Mammary epithelial cell (primary cell): ENCODE measurements at regions of chr12 and their contacts with region 1.

Region 1: DNA sequence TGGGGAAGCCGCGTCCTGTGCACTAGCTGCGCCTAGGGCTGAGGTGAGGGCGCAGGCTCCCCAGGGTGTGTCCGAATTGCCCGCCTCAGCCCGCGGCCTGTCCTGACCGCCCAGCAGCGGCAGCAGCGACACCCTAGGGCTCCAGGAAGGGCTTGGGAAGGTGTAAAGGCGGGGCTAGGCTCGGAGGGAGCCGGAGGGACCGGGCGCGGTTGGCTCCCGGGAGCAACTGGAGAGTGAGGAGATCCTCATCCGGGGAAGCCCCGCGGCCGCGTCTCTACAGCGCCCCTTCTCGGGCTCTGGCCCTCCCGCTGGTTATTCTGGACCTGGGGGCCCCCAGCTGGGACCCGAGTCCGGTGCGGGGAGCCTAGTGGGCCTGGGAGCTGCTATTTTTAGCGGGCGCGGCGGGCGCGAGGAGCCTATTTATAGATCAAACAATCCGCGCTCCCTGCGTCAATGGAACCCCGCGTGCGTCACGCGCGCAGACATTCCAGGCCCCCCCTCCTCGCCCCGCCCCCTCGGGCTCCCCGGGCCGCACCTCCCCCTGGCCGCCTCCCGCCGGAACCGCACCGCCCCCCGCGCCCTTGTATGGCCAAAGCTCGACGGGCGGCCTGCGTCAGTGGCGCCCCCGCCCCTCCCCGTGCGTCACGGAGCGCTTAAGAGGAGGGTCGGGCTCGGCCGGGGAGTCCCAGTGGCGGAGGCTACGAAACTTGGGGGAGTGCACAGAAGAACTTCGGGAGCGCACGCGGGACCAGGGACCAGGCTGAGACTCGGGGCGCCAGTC is at the start of gene NR4A1:
- DNase-seq: peak; percentile 86
- H3K4me3 ChIP-seq: peak within 1 kb of the TSS; percentile 51 to 63 (median 59)
- H3K27ac ChIP-seq: peak within 1 kb of the TSS; percentile 51
- H3K4me1 ChIP-seq: peaks cover 24% of the 10 kb centered on the region
- H3K27me3 ChIP-seq: no peaks in the 10 kb centered on the region
- CTCF ChIP-seq: peak in 1 of 2 donors; percentile 1
- total RNA-seq, gene NR4A1: 0.17 to 2.4 TPM

Region 2: GRCh38 chr12:52069327-52070184 is 18.6 kb after region 1 on chr12 and contains the start of gene ATG101:
- CTCF ChIA-PET with region 1: no interaction called
- dilution Hi-C with region 1: no loop called
- in situ Hi-C with region 1: no loop called
- intact Hi-C with region 1: loop called (anchors 2 kb)
- DNase-seq: peak; percentile 92
- H3K4me3 ChIP-seq: peak within 1 kb of the TSS; percentile 94 to 99 (median 98)
- H3K27ac ChIP-seq: peak within 1 kb of the TSS; percentile 97
- H3K4me1 ChIP-seq: peaks cover 20% of the 10 kb centered on the region
- H3K27me3 ChIP-seq: no peaks in the 10 kb centered on the region
- CTCF ChIP-seq: peak; percentile 61 to 87
- total RNA-seq, gene ATG101: 44.8 to 59.4 TPM

Region 3: DNA sequence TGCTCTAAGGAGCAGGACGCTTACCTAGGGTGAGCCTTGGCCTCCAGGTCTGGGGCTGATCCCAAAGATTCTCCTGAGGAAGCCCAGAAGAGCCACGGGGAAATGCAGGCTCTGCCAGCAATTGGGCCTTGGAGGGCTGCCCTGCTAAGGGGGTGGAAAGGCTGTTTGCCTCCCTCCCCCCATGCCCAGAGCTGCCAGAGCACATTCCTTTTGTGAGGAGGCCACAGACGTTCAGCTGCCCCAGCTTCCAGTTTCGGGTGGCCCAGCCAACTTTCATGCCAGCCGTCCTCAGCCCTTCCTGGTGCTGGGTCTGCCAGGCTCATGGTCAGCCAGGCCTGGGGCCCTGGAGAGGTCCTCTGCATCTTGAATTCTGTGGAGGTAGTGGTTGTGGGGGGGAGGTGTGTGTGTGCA is 198.1 kb after region 1 on chr12:
- CTCF ChIA-PET with region 1: no interaction called
- dilution Hi-C with region 1: no loop called
- in situ Hi-C with region 1: no loop called
- intact Hi-C with region 1: no loop called
- DNase-seq: no peak
- H3K4me3 ChIP-seq: no peak overlapping the region
- H3K27ac ChIP-seq: peak overlapping the region; percentile 18
- H3K4me1 ChIP-seq: peaks cover 16% of the 10 kb centered on the region
- H3K27me3 ChIP-seq: no peaks in the 10 kb centered on the region
- CTCF ChIP-seq: no peak